Natural killer cell (primary cell): ENCODE measurements at regions of chr20 and their contacts with region 1.

Region 1: GRCh38 chr20:36460648-36461599 is 80.4 kb upstream of the MYL9 start:
- DNase-seq: peak; percentile 87 to 97
- ATAC-seq: peak; percentile 78 to 91 (median 86)
- H3K4me3 ChIP-seq: peak overlapping the region; percentile 53
- H3K4me3 Mint-ChIP-seq: peak overlapping the region; percentile 86
- H3K27ac ChIP-seq: peak overlapping the region; percentile 89
- H3K27ac Mint-ChIP-seq: peak overlapping the region; percentile 95 to 96
- H3K4me1 ChIP-seq: peaks cover 49% of the 10 kb centered on the region
- H3K4me1 Mint-ChIP-seq: peaks cover 47 to 48% of the 10 kb centered on the region in 2 donors
- H3K27me3 ChIP-seq: no peaks in the 10 kb centered on the region
- H3K27me3 Mint-ChIP-seq: peaks cover 0 to 2% of the 10 kb centered on the region in 2 donors
- CTCF ChIP-seq: no peak

Region 2: DNA sequence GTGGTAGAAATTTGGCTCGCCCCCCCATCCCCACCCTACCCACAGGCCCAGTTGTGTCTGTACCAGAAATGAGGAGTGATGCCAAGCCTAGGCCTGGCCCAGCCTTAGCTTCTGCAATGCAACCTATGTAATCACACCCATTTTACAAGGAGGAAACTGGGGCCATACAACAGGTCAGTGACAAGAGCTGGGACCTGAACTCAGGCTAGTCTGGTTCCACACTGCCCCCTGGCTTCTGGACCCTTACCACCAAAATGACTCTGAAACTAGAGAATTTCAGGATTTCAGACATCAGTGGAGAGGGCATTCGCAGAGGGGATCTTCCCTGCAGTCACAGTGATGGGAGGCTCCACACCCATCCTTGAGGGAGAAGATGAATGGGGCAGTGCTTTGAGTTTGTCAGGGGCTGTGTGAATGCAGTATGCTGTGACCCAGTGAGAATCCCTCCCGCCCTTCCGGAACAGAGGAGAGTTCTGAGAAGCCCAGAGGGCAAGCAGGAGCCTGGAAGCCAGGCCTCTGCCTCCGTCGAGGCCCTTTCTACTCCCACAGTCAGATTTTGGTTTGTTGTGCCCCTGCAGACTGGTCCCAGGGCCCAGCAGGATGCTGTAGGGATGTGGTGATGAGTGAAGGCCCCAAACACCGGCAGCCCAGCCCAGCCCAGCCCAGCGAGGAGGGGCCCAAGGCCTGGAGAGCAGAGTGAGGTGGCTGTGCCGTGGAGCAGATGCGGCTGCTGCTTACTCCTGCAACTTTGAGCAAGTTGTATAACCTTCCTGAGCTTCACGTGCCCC is 32.3 kb after region 1 on chr20:
- intact Hi-C with region 1: loop called (anchors 2 kb)
- DNase-seq: peak in 1 of 2 donors; percentile 40
- ATAC-seq: peak in 2 of 3 donors; percentile 8 to 31
- H3K4me3 ChIP-seq: no peak overlapping the region
- H3K4me3 Mint-ChIP-seq: peak overlapping the region; percentile 18
- H3K27ac ChIP-seq: peak overlapping the region; percentile 90
- H3K27ac Mint-ChIP-seq: peak overlapping the region; percentile 92 to 97
- H3K4me1 ChIP-seq: peaks cover 49% of the 10 kb centered on the region
- H3K4me1 Mint-ChIP-seq: peaks cover 47 to 64% of the 10 kb centered on the region in 2 donors
- H3K27me3 ChIP-seq: no peaks in the 10 kb centered on the region
- H3K27me3 Mint-ChIP-seq: no peaks in the 10 kb centered on the region
- CTCF ChIP-seq: peak; percentile 20

Region 3: GRCh38 chr20:37527638-37528441 is 1066.9 kb after region 1 on chr20 and contains the start of gene BLCAP:
- intact Hi-C with region 1: loop called (anchors 10 kb)
- DNase-seq: peak; percentile 90 to 96
- ATAC-seq: peak; percentile 86 to 95 (median 88)
- H3K4me3 ChIP-seq: peak within 1 kb of the TSS; percentile 88
- H3K4me3 Mint-ChIP-seq: peak within 1 kb of the TSS; percentile 96
- H3K27ac ChIP-seq: peak within 1 kb of the TSS; percentile 90
- H3K27ac Mint-ChIP-seq: peak within 1 kb of the TSS; percentile 99
- H3K4me1 ChIP-seq: peaks cover 40% of the 10 kb centered on the region
- H3K4me1 Mint-ChIP-seq: peaks cover 52 to 66% of the 10 kb centered on the region in 2 donors
- H3K27me3 ChIP-seq: no peaks in the 10 kb centered on the region
- H3K27me3 Mint-ChIP-seq: peaks cover 0 to 3% of the 10 kb centered on the region in 2 donors
- CTCF ChIP-seq: no peak
- total RNA-seq, gene BLCAP: 60.4 to 80.1 (median 77.9) TPM